ENCODE measurements at regions of chr12 and their contacts with region 1.

Region 1: DNA sequence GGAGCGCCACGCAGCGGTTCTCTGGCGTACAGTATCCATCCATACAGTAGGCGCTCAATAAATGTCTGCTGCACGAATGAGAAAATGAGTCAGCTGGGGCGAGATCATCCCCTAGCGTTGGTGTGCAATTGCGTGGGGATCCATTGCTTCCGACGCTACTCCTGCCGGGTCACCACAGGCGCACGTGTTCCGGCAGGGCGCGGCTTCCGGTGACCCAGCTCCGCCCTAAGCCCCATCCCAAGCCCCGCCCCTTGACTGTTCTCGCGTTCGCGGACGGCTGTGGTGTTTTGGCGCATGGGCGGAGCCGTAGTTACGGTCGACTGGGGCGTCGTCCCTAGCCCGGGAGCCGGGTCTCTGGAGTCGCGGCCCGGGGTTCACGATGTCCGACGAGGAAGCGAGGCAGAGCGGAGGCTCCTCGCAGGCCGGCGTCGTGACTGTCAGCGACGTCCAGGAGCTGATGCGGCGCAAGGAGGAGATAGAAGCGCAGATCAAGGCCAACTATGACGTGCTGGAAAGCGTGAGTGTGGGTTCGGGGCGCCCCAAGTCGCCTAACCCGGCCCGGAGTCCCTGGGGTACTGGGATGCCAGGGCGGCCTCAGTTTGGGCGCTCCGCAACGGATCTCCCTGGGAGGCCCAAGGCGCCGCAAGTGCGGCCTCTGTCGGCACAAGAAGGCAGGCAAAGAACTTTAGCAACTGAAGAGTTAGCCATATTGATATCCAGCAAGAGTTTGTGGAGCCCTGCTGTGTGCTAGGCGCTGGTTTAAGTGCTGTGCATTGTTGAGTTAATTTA is at the start of gene PSMD9:
- DNase-seq: peak; percentile 92
- ATAC-seq: peak; percentile 96
- H3K4me3 ChIP-seq: peak within 1 kb of the TSS; percentile 71 to 87 (median 85)
- H3K27ac ChIP-seq: peak within 1 kb of the TSS; percentile 89
- H3K4me1 ChIP-seq: peaks cover 36% of the 10 kb centered on the region
- H3K27me3 ChIP-seq: no peaks in the 10 kb centered on the region; a peak in 1 of 5 replicates
- CTCF ChIP-seq: peak; percentile 94
- EP300 ChIP-seq: peak in 1 of 2 experiments; percentile 30; a peak in 1 of 4 replicates
- POLR2A ChIP-seq: peak; percentile 74 to 80
- RAD21 ChIP-seq: peak; percentile 83
- total RNA-seq, gene PSMD9: 61.1 and 73.9 TPM in 2 replicates

Region 2: DNA sequence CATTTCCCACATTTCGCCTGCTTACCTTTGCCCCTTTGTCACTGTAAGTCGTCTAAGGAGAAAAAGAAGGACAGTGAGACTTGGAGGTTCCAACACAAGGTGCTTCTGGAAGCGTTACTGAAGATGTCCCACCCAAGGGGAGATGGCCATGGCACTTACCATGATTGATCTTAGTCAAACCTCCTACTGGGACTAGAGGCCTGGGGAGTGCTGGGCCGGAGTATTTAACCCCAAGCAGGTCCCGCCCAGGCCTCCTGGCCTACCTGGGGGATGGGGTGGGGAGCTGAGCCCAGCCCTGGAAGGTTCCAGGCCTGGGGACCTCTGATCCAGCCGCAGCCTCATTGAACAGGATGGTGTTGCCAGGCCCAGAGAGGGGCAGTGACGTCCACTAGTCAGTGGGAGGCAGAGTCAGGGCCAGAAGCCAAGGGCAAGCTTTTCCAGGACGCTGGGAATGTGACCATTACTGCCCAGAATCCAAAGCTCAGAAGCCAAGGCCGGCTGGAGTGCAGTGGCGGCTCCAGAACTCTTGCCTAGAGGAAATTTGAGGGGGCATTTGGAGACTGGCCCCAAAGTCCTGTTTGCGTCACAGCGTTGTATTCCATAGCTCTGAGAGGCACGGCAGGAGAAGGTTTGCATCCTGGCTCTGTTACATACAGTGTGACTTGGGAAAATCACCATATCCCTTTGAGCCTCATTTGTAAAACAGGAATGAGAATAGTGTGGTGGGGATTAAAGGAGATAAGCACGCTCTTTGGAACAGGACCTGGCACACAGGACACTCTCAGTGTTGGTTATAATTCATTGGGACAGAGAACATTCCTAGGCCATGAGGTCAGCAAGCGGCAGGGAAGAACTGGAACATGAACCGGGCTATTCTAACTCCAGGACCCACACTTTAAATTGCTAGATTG is 29.8 kb before region 1 on chr12 and contains the start of gene HPD:
- CTCF ChIA-PET with region 1: no interaction called
- POLR2A ChIA-PET with region 1: interaction called, 39 read pairs
- in situ Hi-C with region 1: no loop called
- intact Hi-C with region 1: loop called (anchors 1 kb)
- DNase-seq: peak; percentile 91
- ATAC-seq: peak; percentile 70
- H3K4me3 ChIP-seq: peak within 1 kb of the TSS; percentile 58 to 78 (median 60)
- H3K27ac ChIP-seq: peak within 1 kb of the TSS; percentile 100
- H3K4me1 ChIP-seq: peaks cover 76% of the 10 kb centered on the region
- H3K27me3 ChIP-seq: no peaks in the 10 kb centered on the region; a peak in 1 of 5 replicates
- CTCF ChIP-seq: peak; percentile 63
- EP300 ChIP-seq: peak in 1 of 2 experiments; percentile 33; a peak in 1 of 4 replicates
- POLR2A ChIP-seq: peak; percentile 73 to 83
- RAD21 ChIP-seq: peak; percentile 61
- total RNA-seq, gene HPD: 120 and 138 TPM in 2 replicates

Region 3: GRCh38 chr12:121872546-121873215 is 16.0 kb before region 1 on chr12:
- CTCF ChIA-PET with region 1: no interaction called
- POLR2A ChIA-PET with region 1: interaction called, 17 read pairs
- in situ Hi-C with region 1: no loop called
- intact Hi-C with region 1: no loop called
- DNase-seq: no peak
- ATAC-seq: no peak
- H3K4me3 ChIP-seq: no peak overlapping the region
- H3K27ac ChIP-seq: peak overlapping the region; percentile 26
- H3K4me1 ChIP-seq: peaks cover 29% of the 10 kb centered on the region
- H3K27me3 ChIP-seq: no peaks in the 10 kb centered on the region
- CTCF ChIP-seq: no peak
- EP300 ChIP-seq: no peak
- POLR2A ChIP-seq: no peak
- RAD21 ChIP-seq: no peak